ENCODE measurements at regions of chr21 and their contacts with region 1.

Region 1: DNA sequence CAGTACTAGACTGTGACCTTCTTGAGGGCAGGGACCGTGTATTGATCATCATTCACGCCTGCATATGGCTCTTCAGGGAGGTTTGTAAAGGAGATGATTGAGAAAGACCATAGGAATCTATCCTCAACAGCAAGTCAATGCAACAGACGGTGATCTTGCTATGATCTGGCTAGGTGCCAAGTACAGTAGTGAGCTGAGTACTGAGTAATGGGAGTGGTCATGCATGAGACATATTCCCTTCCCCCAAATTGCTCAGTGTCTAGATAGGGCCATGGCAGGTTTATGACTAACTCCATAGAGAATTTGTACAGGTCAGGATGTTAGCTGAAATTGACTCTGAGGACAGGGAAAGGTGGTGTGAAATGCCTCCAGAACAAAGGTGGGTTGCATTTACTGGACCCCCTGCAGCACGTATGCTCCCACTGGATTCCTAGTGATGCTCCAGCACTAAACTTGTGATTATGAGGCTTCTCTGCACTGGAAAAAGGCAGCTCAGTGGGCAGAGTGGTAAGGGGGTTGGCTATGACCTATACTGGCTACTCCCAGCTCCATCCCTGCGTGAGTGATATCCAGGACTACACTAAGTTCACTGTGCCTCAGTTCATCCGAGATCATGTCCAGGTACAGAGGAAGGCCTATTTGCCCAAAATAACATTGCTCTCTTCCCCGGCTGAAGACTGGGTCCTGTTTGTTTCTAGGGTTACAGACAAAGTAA is 37.2 kb downstream of the KCNJ6 start:
- DNase-seq: no peak
- CTCF ChIP-seq: no peak

Region 2: DNA sequence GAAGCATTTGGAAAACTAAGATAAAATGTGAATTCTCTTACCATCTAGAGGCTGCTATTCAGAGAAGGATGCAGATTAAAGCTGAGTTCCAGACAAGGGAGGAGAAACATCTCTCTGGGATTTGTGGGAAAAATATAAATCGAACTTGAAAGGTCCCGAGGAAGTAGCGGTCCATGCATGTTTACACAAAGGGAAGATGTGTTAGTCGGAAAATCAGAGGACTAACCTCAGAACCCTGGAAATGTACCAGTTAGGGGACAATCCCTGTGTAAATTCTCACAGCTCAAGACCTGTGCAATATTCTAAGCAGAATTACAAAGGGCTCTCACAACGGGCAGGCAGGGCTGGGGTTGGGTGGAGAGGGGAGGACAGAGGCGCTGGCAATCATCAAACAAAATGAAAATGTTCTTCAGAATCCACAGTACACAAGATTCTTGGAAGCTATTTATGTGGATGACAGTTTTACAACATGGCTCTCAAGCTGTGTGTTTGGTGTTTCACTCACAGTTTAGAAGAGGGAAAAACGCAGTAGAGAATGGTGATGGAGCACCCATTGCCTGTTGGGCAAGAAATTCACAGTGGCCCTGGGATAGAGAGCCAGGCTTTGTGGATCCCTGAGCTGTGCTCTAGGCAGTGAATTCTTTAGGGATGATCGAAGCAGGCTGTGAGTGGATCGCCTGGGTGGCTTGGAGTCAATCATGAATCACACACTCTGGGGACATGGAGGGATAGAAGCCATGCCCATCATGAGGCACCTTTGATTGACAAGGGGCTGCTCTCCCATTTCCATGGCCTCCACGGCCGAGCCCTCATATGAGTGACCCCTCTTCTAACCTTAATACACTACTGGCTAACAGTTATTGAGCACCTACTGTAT is 10.4 kb before region 1 on chr21:
- CTCF ChIA-PET with region 1: interaction called, 11 read pairs
- POLR2A ChIA-PET with region 1: no interaction called
- DNase-seq: no peak
- CTCF ChIP-seq: no peak